ENCODE measurements at regions of chr14 and their contacts with region 1.

Region 1: GRCh38 chr14:84087986-84088531 is 1441.9 kb upstream of the FLRT2 start:
- DNase-seq: no peak
- H3K4me3 Mint-ChIP-seq: no peak overlapping the region
- H3K27ac Mint-ChIP-seq: no peak overlapping the region
- H3K4me1 Mint-ChIP-seq: no peaks in the 10 kb centered on the region
- H3K27me3 Mint-ChIP-seq: no peaks in the 10 kb centered on the region

Region 2: GRCh38 chr14:84041421-84041820 is 46.6 kb before region 1 on chr14:
- intact Hi-C with region 1: loop called (anchors 2 kb)
- DNase-seq: no peak
- H3K4me3 Mint-ChIP-seq: no peak overlapping the region
- H3K27ac Mint-ChIP-seq: no peak overlapping the region
- H3K4me1 Mint-ChIP-seq: peaks cover 6% of the 10 kb centered on the region
- H3K27me3 Mint-ChIP-seq: no peaks in the 10 kb centered on the region

Region 3: GRCh38 chr14:84074626-84075025 is 13.4 kb before region 1 on chr14:
- intact Hi-C with region 1: no loop called
- DNase-seq: no peak
- H3K4me3 Mint-ChIP-seq: no peak overlapping the region
- H3K27ac Mint-ChIP-seq: no peak overlapping the region
- H3K4me1 Mint-ChIP-seq: no peaks in the 10 kb centered on the region
- H3K27me3 Mint-ChIP-seq: no peaks in the 10 kb centered on the region

Region 4: DNA sequence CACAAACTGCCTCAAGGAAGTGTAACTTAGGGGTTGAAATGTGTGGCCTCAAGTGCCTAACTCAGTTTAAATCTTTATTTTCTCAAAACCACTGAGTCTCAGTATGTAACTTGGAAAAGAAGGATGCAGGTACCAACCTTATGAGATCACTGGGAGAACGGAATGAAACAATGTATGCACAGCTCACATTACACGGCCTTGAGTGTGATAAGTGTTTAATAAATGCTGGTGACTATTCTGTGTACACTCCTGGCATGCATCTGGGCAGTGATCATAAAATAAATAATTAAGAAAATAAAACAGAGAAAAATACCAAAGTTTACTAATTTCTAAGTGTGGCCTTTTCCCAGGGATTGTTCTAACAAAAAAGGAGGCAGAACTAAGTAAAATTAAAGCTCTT is 467.4 kb after region 1 on chr14:
- intact Hi-C with region 1: no loop called
- DNase-seq: no peak
- H3K4me3 Mint-ChIP-seq: no peak overlapping the region
- H3K27ac Mint-ChIP-seq: no peak overlapping the region
- H3K4me1 Mint-ChIP-seq: no peaks in the 10 kb centered on the region
- H3K27me3 Mint-ChIP-seq: no peaks in the 10 kb centered on the region

Measured in activated T-helper 2 cell treated with anti-CD3 and anti-CD28 coated beads, Interferon-gamma antibody, Interleukin-2, Interleukin-4, amounts not matched to agents 10 μg/mL and 5 μg/mL and 100 μg/mL, durations not matched to agents 14 hours and 24 hours and 36 hours (primary cell).